Activated T-helper 2 cell treated with anti-CD3 and anti-CD28 coated beads, Interferon-gamma antibody, Interleukin-2, Interleukin-4, amounts not matched to agents 10 μg/mL and 5 μg/mL and 100 μg/mL, durations not matched to agents 14 hours and 24 hours and 36 hours (primary cell): ENCODE measurements at regions of chr1 and their contacts with region 1.

Region 1: DNA sequence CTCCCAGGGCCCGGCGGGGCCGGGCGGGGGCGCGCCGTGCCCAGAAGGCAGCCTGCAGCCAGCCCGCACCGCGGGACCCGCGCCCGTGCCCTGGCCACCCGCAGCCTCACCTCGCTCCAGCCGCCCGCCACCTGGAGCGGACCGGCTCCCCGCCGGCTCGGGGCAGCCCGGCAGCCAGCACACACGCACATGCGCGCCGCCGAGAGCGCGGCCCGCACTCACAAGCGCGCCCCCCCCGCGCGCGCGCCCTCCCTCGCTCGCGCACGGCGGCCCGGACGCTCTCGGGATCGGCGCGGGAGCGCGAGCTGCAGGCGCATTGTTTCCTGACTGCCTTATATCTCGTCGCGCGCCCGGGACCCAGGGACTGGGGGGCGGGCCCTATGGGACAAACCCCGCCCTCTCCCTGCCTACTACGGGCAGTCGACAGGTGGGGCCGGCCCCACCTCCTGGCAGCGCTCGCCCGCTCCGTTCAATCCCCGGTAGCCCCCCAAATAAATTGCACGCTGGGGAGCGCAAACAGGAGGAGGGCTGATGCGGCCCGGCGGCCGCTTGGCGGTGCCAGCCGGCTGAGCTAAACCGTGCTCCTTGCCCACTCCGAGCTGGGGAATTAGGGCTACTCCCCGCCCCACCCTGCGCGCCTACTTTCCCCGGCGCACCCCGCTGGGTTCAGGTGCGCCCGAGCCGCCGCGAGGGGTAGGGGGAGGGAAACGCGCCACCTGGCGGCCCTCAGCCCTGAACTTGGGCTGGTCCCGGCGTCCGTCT is at the start of gene MYCL:
- DNase-seq: peak; percentile 63
- H3K4me3 Mint-ChIP-seq: peak within 1 kb of the TSS; percentile 68
- H3K27ac Mint-ChIP-seq: no peak within 1 kb of the TSS
- H3K4me1 Mint-ChIP-seq: peaks cover 6% of the 10 kb centered on the region
- H3K27me3 Mint-ChIP-seq: peaks cover 65% of the 10 kb centered on the region
- total RNA-seq, gene MYCL: 0.50 and 0.57 TPM in 2 replicates

Region 2: DNA sequence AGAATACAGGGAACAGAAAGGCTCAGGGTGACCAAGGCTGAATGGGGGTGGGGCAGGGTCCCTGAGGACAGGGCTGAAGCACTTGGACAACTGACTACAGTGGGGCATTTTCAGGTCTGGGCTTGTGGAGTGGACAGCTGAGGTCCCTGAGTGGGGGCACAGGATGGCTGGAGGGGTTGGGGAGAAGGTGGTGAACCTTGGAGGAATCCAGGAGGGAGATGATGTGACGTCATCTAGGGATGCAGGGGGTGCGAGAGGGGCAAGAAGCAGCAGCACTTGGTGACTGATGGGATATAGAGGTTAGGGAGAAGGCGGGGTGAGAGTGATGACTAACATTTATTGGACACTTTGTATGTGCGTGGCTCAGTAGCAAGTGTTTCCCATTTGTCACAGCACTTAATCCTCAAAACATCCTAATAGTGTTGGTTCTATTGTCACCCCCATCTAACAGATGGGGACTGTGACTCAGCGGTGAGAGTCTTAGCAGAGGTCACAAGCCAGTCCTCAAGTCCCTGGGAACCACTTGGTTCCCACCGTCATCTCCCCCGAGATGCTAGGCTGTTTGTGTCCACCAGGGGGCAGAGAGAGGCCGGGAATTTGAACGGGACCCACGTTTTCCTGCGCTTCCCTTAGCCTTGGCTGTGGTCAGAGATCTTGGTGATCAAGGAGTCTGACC is 85.3 kb before region 1 on chr1:
- intact Hi-C with region 1: loop called (anchors 1 kb)
- DNase-seq: peak; percentile 44
- H3K4me3 Mint-ChIP-seq: no peak overlapping the region
- H3K27ac Mint-ChIP-seq: no peak overlapping the region
- H3K4me1 Mint-ChIP-seq: peaks cover 10% of the 10 kb centered on the region
- H3K27me3 Mint-ChIP-seq: peaks cover 26% of the 10 kb centered on the region

Region 3: DNA sequence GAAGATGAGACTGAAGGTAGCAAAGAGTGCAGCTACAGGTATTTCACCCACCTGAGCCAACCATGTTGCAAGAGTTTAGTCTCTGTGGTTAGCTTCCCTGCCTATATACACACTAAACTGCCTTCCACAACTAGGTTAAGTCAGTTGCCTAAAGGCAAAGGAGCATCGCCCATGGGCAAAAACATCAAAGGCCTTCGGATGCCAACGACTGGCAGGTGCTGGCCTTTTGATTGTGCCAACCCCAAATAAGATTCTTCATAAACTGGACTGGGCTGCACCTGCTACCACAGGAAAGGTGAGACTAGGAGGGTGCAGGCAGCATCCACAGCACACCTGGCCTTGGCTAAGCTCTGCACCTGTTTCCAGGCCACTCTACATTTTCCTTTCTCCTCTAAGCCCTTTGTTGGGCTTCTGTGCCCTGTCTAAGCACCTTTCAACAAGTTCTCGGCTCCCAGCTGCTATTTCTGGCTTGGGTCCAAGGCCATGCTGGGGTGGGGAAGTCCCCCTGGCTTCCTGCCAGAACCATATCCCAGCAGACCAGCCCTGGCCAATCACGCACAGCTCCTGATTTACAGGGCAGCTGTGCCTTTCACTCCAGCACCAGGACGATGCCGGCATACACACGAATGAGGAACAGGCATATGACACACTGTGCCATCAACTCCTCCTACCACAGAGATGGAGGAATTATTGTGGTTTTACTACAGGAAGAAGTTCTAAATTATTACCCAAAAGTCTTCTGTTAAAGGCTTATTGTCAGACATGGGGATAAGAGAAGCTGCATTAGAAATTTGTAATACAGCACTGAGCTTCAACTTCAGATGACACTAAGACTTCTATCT is 56.4 kb before region 1 on chr1:
- intact Hi-C with region 1: loop called (anchors 5 kb)
- DNase-seq: peak; percentile 44
- H3K4me3 Mint-ChIP-seq: peak overlapping the region; percentile 41
- H3K27ac Mint-ChIP-seq: peak overlapping the region; percentile 81
- H3K4me1 Mint-ChIP-seq: peaks cover 38% of the 10 kb centered on the region
- H3K27me3 Mint-ChIP-seq: no peaks in the 10 kb centered on the region

Region 4: GRCh38 chr1:39882152-39882551 is 19.7 kb before region 1 on chr1:
- intact Hi-C with region 1: loop called (anchors 2 kb)
- DNase-seq: no peak
- H3K4me3 Mint-ChIP-seq: peak overlapping the region; percentile 95
- H3K27ac Mint-ChIP-seq: no peak overlapping the region
- H3K4me1 Mint-ChIP-seq: peaks cover 22% of the 10 kb centered on the region
- H3K27me3 Mint-ChIP-seq: no peaks in the 10 kb centered on the region

Region 5: DNA sequence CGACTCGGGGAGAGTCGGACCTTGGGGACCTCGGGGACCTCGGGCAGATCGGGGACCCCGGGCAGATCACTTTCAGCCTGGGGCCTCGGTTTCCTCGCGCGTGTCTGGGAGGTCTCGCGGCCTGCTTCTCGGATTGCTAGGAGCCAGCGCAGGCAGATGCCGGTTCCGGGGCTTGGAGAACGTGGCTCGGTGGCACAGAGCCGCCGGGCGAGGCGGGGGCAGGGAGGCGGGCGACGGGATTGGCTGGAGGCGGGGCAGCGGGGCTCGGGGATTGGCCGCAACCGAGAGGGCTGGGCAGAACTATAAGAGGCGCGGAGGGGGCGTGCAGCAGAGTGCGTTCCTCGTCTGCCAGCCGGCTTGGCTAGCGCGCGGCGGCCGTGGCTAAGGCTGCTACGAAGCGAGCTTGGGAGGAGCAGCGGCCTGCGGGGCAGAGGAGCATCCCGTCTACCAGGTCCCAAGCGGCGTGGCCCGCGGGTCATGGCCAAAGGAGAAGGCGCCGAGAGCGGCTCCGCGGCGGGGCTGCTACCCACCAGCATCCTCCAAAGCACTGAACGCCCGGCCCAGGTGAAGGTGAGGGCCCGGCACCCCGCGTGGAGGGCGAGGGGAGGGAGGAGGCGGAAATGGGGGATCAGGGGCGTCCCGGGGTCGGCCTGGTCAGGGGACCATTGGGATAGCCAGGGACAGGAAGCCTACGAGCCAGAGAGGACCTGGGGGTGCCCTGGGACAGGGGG is 53.1 kb after region 1 on chr1 and contains the start of gene MFSD2A:
- intact Hi-C with region 1: loop called (anchors 5 kb)
- DNase-seq: peak; percentile 81
- H3K4me3 Mint-ChIP-seq: peak within 1 kb of the TSS; percentile 95
- H3K27ac Mint-ChIP-seq: peak within 1 kb of the TSS; percentile 92
- H3K4me1 Mint-ChIP-seq: peaks cover 52% of the 10 kb centered on the region
- H3K27me3 Mint-ChIP-seq: peaks cover 7% of the 10 kb centered on the region
- total RNA-seq, gene MFSD2A: 43.3 and 47.8 TPM in 2 replicates